Dendritic cell treated with granulocyte-macrophage colony-stimulating factor and Interleukin-4, amounts not matched to agents 40 ng/mL and 50 ng/mL, for 4 days (primary cell): ENCODE measurements at regions of chr11 and their contacts with region 1.

Region 1: DNA sequence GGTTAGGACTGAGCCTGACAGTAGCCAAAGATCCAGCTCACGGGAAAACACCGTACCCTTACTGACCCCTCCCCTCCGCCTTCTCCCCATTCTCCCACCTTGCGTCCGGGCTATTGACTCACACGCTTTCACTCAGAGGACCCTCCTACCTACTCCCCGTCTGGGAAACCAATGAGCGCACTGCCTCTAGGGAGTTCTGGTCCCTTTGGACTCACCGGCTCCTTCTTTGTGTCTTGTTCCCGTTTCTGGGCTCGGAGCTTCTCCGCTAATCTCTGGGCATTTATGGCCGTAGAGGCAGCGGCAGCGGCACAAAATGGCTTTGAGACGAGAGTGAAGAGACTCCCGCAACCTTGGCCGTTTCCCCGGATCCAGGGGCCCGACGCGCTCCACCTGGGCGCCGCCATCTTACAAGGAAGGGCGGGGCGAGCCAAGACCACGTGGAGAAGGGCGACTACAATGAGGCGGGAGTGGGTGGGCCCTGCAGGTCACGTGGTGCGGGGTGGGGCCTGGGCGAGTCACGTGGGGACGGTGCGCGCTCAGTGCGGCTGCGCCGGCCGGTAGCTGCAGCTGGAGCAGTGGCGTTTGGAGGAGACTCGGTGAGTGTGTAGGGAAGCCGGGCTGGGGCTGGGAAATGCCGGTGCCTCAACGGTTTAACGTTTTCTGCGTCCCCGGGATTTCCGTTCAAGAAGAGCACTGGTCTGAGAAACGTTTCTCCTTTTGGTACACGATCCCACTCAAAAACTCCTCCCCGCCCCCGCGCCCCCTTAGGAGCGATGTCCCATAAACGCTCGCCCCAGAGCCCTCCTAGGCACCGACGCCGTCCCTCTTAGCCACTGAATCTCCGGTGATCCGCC is at the starts of genes FAM118B and RPUSD4:
- H3K4me3 Mint-ChIP-seq: peak within 1 kb of the TSS; percentile 97
- H3K27ac Mint-ChIP-seq: peak within 1 kb of the TSS; percentile 94
- H3K4me1 Mint-ChIP-seq: peaks cover 46% of the 10 kb centered on the region
- H3K27me3 Mint-ChIP-seq: no peaks in the 10 kb centered on the region

Region 2: GRCh38 chr11:125062931-125063428 is 1148.5 kb before region 1 on chr11 and contains the start of gene SLC37A2:
- intact Hi-C with region 1: loop called (anchors 10 kb)
- H3K4me3 Mint-ChIP-seq: peak within 1 kb of the TSS; percentile 87
- H3K27ac Mint-ChIP-seq: peak within 1 kb of the TSS; percentile 96
- H3K4me1 Mint-ChIP-seq: peaks cover 37% of the 10 kb centered on the region
- H3K27me3 Mint-ChIP-seq: no peaks in the 10 kb centered on the region

Region 3: GRCh38 chr11:125902927-125903710 is 308.3 kb before region 1 on chr11 and contains the start of gene PUS3:
- intact Hi-C with region 1: loop called (anchors 1 kb)
- H3K4me3 Mint-ChIP-seq: peak within 1 kb of the TSS; percentile 89
- H3K27ac Mint-ChIP-seq: peak within 1 kb of the TSS; percentile 90
- H3K4me1 Mint-ChIP-seq: peaks cover 20% of the 10 kb centered on the region
- H3K27me3 Mint-ChIP-seq: peaks cover 37% of the 10 kb centered on the region

Region 4: GRCh38 chr11:126048198-126048597 is 163.3 kb before region 1 on chr11:
- intact Hi-C with region 1: no loop called
- H3K4me3 Mint-ChIP-seq: no peak overlapping the region
- H3K27ac Mint-ChIP-seq: no peak overlapping the region
- H3K4me1 Mint-ChIP-seq: no peaks in the 10 kb centered on the region
- H3K27me3 Mint-ChIP-seq: peaks cover 7% of the 10 kb centered on the region

Region 5: GRCh38 chr11:126102436-126102981 is 109.0 kb before region 1 on chr11:
- intact Hi-C with region 1: no loop called
- H3K4me3 Mint-ChIP-seq: no peak overlapping the region
- H3K27ac Mint-ChIP-seq: no peak overlapping the region
- H3K4me1 Mint-ChIP-seq: no peaks in the 10 kb centered on the region
- H3K27me3 Mint-ChIP-seq: no peaks in the 10 kb centered on the region

Region 6: GRCh38 chr11:126268708-126269579 is 57.5 kb after region 1 on chr11 and contains the starts of genes FOXRED1 and SRPRA:
- intact Hi-C with region 1: loop called (anchors 1 kb)
- H3K4me3 Mint-ChIP-seq: peak within 1 kb of the TSS; percentile 94
- H3K27ac Mint-ChIP-seq: peak within 1 kb of the TSS; percentile 98
- H3K4me1 Mint-ChIP-seq: peaks cover 28% of the 10 kb centered on the region
- H3K27me3 Mint-ChIP-seq: no peaks in the 10 kb centered on the region

Region 7: DNA sequence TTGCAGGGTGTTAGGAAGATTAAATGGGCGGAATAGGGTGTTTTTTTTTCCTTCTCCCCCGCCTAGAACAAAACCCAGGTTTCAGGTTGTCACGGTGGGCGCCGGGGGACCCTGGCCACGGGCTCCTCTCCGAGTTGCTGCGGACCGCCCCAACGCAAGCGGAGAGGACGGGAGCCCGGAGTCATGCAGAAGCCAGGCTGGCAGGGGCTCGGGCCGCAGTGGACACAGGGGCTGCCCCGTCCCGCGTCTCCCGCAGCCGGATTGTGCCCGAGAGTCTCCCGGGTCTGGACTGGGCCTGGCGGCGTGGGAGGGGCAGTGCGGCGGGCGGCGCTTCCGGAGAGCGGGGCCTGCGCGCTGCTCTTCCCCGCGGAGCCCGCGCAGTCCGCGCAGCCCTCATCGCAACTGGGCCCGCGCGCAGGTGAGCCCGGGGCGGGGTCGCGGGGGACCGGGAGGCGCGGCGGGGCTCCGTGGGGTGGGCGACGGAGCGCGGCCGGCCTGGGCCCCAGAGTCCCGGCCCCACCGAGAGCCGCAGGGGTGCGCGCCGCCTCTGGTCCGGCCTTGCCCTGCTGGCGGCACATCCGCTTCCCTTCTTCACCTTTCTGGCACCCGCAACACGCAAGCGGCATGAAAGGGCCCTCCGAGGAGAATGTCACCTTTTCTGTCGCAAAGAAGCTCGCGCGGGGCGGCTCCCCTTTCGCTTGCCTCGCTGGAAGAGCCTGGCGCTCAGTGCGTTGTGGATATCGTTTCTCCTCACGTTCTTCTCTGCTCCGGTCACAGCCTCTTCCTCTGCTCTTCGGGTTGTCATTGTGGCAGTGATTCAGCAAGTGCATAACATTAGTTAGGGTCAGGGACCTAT is 71.5 kb after region 1 on chr11 and contains the start of gene TIRAP:
- intact Hi-C with region 1: loop called (anchors 5 kb)
- H3K4me3 Mint-ChIP-seq: peak within 1 kb of the TSS; percentile 98
- H3K27ac Mint-ChIP-seq: peak within 1 kb of the TSS; percentile 93
- H3K4me1 Mint-ChIP-seq: peaks cover 53% of the 10 kb centered on the region
- H3K27me3 Mint-ChIP-seq: no peaks in the 10 kb centered on the region